ENCODE measurements at regions of chr22 and their contacts with region 1.

Region 1: GRCh38 chr22:37566903-37567820 is 6.9 kb downstream of the CDC42EP1 start:
- DNase-seq: peak; percentile 82
- H3K4me3 Mint-ChIP-seq: no peak overlapping the region
- H3K27ac Mint-ChIP-seq: no peak overlapping the region
- H3K4me1 Mint-ChIP-seq: peaks cover 32% of the 10 kb centered on the region
- H3K27me3 Mint-ChIP-seq: no peaks in the 10 kb centered on the region
- CTCF ChIP-seq: peak; percentile 84

Region 2: GRCh38 chr22:37457093-37457893 is 109.9 kb before region 1 on chr22:
- CTCF ChIA-PET with region 1: interaction called, 10 read pairs
- POLR2A ChIA-PET with region 1: no interaction called
- intact Hi-C with region 1: no loop called
- DNase-seq: peak; percentile 79
- H3K4me3 Mint-ChIP-seq: no peak overlapping the region
- H3K27ac Mint-ChIP-seq: no peak overlapping the region
- H3K4me1 Mint-ChIP-seq: peaks cover 20% of the 10 kb centered on the region
- H3K27me3 Mint-ChIP-seq: no peaks in the 10 kb centered on the region
- CTCF ChIP-seq: peak; percentile 98

Region 3: DNA sequence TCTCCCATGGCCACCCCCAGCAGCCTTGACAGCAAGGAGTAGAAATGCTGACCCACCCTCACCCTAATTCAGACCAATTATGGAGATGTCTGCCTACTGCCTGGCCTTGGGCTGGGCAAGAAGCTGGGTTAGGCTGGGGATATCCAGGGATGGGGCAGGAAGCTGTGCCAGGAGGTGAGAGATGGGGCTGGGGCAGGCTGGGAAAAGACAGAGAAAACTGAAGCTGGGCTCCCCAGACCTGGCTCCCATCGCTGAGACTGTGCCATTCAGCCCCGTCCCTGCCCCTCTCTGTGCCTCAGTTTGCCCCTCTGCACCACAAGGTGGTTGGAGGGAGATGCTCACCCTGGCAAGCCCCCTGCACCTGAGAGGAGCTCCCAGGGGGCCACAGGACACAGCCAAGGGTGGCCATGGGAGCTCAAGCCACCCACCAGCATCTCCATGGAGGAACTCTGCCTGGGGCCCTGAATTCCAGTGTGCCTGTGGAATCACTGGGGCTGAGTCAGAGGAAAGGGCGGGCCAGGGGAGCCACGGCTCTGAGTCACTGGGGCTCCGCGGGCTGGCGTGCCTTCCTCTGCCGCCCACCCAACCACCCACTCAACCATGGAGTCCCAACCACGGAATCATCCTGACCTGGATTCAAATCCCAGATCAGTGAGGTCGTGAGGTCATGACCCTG is 42.0 kb before region 1 on chr22:
- CTCF ChIA-PET with region 1: interaction called, 18 read pairs
- POLR2A ChIA-PET with region 1: interaction called, 8 read pairs
- intact Hi-C with region 1: no loop called
- DNase-seq: peak; percentile 94
- H3K4me3 Mint-ChIP-seq: no peak overlapping the region
- H3K27ac Mint-ChIP-seq: peak overlapping the region; percentile 57
- H3K4me1 Mint-ChIP-seq: peaks cover 13% of the 10 kb centered on the region
- H3K27me3 Mint-ChIP-seq: no peaks in the 10 kb centered on the region
- CTCF ChIP-seq: no peak

Region 4: DNA sequence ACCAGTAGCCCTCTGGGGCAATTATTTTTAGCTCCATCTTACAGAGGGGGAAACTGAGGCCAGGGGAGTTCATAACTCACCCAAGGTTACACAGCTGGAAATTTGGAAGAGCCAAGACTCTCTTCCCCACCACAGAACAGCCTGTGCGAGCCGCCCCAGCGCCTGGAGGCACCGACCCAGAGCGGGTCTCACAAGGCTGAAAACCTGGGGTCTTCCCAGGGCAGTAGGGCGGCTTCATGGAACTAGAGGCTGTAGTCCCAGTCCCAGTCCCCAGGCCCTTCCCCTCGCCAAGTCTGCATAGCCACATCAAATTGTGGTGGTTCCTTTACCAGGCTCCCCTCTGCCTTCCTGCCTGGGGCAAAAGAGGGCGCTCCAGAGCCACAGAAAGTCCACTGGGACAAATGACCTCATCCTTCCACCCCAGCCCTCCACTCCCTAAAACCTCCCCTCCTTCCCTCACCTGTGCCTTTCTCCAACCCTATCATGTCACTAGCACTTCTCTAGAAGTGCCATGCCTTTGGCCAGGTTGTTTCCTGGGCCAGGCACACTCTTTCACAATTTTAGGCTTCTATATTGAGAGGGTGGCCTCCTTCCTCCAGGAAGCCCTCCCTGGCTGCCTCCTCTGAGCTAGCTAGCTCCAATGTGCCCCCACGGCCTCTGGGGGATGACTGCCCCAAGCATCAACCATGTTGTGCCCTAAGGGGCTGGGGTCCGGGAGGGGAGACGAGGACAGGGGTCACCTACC is 22.0 kb before region 1 on chr22:
- CTCF ChIA-PET with region 1: interaction called, 667 read pairs
- POLR2A ChIA-PET with region 1: interaction called, 194 read pairs
- intact Hi-C with region 1: loop called (anchors 1 kb)
- DNase-seq: peak; percentile 91
- H3K4me3 Mint-ChIP-seq: peak overlapping the region; percentile 50
- H3K27ac Mint-ChIP-seq: peak overlapping the region; percentile 78
- H3K4me1 Mint-ChIP-seq: peaks cover 28% of the 10 kb centered on the region
- H3K27me3 Mint-ChIP-seq: no peaks in the 10 kb centered on the region
- CTCF ChIP-seq: peak; percentile 79

Region 5: GRCh38 chr22:37588546-37589215 is 21.5 kb after region 1 on chr22:
- CTCF ChIA-PET with region 1: interaction called, 131 read pairs
- POLR2A ChIA-PET with region 1: interaction called, 19 read pairs
- intact Hi-C with region 1: no loop called
- DNase-seq: no peak
- H3K4me3 Mint-ChIP-seq: no peak overlapping the region
- H3K27ac Mint-ChIP-seq: no peak overlapping the region
- H3K4me1 Mint-ChIP-seq: peaks cover 12% of the 10 kb centered on the region
- H3K27me3 Mint-ChIP-seq: no peaks in the 10 kb centered on the region
- CTCF ChIP-seq: no peak